Activated CD4-positive, alpha-beta memory T cell treated with anti-CD3 and anti-CD28 coated beads for 36 hours (primary cell): ENCODE measurements at regions of chr7 and their contacts with region 1.

Region 1: GRCh38 chr7:129530795-129531391 is 28.6 kb downstream of the SMKR1 start:
- DNase-seq: peak; percentile 86
- H3K4me3 Mint-ChIP-seq: no peak overlapping the region
- H3K27ac Mint-ChIP-seq: peak overlapping the region; percentile 19
- H3K4me1 Mint-ChIP-seq: peaks cover 9% of the 10 kb centered on the region
- H3K27me3 Mint-ChIP-seq: peaks cover 11% of the 10 kb centered on the region

Region 2: DNA sequence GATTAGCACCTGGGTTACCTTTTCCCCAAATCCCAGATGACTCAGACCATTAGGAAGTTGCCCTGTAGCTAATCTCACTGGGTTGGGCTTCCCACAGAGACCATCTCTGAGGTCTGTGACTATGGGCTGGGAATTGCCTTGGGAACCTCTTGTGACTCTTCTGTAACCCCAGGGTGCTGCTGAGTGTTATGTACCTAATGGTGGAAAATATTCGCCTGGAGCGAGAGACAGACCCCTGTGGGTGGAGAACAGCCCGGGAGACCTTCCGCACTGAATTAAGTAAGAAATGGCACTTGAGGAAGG is 76.7 kb before region 1 on chr7:
- CTCF ChIA-PET with region 1: no interaction called
- POLR2A ChIA-PET with region 1: no interaction called
- intact Hi-C with region 1: no loop called
- DNase-seq: no peak
- H3K4me3 Mint-ChIP-seq: no peak overlapping the region
- H3K27ac Mint-ChIP-seq: no peak overlapping the region
- H3K4me1 Mint-ChIP-seq: peaks cover 2% of the 10 kb centered on the region
- H3K27me3 Mint-ChIP-seq: no peaks in the 10 kb centered on the region

Region 3: GRCh38 chr7:129494041-129494440 is 36.9 kb before region 1 on chr7:
- CTCF ChIA-PET with region 1: no interaction called
- POLR2A ChIA-PET with region 1: no interaction called
- intact Hi-C with region 1: loop called (anchors 2 kb)
- DNase-seq: peak; percentile 16
- H3K4me3 Mint-ChIP-seq: no peak overlapping the region
- H3K27ac Mint-ChIP-seq: no peak overlapping the region
- H3K4me1 Mint-ChIP-seq: peaks cover 21% of the 10 kb centered on the region
- H3K27me3 Mint-ChIP-seq: no peaks in the 10 kb centered on the region

Region 4: GRCh38 chr7:129553861-129554530 is 23.1 kb after region 1 on chr7:
- CTCF ChIA-PET with region 1: no interaction called
- POLR2A ChIA-PET with region 1: no interaction called
- intact Hi-C with region 1: loop called (anchors 1 kb)
- DNase-seq: peak; percentile 72
- H3K4me3 Mint-ChIP-seq: no peak overlapping the region
- H3K27ac Mint-ChIP-seq: no peak overlapping the region
- H3K4me1 Mint-ChIP-seq: peaks cover 5% of the 10 kb centered on the region
- H3K27me3 Mint-ChIP-seq: peaks cover 3% of the 10 kb centered on the region